ENCODE measurements at regions of chr11 and their contacts with region 1.

Region 1: DNA sequence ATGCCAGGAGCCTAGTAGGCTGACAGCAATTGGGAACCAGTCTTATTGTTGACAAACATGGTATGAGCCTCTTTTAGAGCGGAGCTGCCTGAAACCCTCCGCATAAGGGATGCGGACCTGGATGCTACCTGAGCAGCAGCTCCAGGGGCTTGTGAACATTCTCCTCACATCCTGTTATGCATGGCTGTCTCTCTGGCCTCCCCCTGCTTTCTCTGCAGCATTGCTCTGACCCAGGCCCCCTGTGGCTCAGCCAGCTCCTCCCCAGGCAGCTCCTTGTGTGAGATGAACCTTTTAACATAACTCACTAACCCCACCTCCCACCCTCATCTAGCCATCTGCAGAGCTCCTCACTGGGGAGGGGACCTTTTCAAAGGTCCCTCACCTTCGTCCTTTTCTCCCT is 6.0 kb downstream of the BMAL1 start:
- DNase-seq: no peak
- ATAC-seq: no peak
- H3K4me3 ChIP-seq: no peak overlapping the region
- H3K27ac ChIP-seq: peak overlapping the region; percentile 16
- H3K4me1 ChIP-seq: peaks cover 78% of the 10 kb centered on the region
- H3K27me3 ChIP-seq: no peaks in the 10 kb centered on the region
- CTCF ChIP-seq: no peak

Region 2: GRCh38 chr11:13261591-13262061 is 22.0 kb before region 1 on chr11:
- intact Hi-C with region 1: no loop called
- DNase-seq: peak in 1 of 2 donors; percentile 53
- ATAC-seq: peak; percentile 81 to 89 (median 84)
- H3K4me3 ChIP-seq: no peak overlapping the region
- H3K27ac ChIP-seq: peak overlapping the region; percentile 63
- H3K4me1 ChIP-seq: peaks cover 12% of the 10 kb centered on the region
- H3K27me3 ChIP-seq: no peaks in the 10 kb centered on the region
- CTCF ChIP-seq: no peak

Region 3: DNA sequence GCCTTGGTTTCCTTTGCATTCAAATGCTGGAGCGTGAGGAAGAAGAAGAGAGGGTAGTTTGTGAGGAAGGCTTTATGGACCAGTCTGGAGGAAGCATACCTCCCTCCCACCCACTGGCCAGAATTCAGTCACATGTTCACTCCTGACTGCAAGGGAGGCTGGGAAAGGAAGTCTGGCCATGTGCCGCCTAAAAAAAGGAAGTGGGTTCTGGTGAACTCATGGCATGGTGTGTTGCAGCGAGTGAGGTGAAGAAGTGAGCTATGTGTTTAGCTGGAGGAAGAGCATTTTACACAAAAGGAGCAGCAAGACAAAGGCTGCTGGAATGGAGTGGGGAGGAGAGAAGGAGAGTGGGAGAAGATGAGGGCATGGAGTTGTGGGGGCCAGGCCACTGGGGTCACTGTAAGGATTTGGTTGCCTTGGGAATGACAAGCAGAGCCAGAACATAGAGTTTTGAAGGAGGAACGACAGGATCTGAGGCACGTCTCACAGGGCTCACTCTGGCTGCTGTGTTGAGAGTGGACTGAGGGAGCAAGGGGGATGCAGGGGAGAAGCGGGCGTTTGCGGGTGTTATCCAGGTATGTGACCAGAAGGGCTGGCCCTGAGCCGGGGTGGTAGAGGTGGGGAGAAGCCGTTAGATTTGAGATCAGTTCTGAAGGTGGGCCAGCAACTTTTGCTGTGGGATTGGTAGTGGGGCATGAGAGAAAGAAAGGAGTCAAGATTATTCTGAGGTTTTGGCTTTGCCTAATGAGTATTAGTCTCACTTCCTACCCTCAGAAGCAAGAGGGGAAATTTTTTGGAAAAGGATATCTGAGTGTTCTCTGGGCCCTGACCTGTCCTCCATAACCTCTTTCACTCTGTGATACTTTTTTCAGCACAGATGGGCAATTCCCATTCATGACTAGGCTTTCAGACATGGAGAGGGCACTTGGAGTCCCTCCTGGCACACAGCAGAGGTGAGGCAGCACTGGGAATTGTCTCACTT is 20.3 kb after region 1 on chr11:
- intact Hi-C with region 1: loop called in 1 of 2 experiments (anchors 2 kb)
- DNase-seq: no peak
- ATAC-seq: peak in 3 of 4 donors; percentile 17 to 32 (median 23)
- H3K4me3 ChIP-seq: no peak overlapping the region
- H3K27ac ChIP-seq: peak overlapping the region; percentile 86
- H3K4me1 ChIP-seq: peaks cover 91% of the 10 kb centered on the region
- H3K27me3 ChIP-seq: no peaks in the 10 kb centered on the region
- CTCF ChIP-seq: no peak